CD8-positive, alpha-beta T cell (primary cell): ENCODE measurements at regions of chr10 and their contacts with region 1.

Region 1: GRCh38 chr10:6401562-6402348 is 178.3 kb downstream of the PRKCQ start:
- DNase-seq: peak in 8 of 9 experiments; percentile 40 to 83 (median 62)
- ATAC-seq: peak; percentile 92
- H3K4me3 ChIP-seq: no peak overlapping the region
- H3K4me3 Mint-ChIP-seq: no peak overlapping the region
- H3K27ac ChIP-seq: no peak overlapping the region
- H3K27ac Mint-ChIP-seq: no peak overlapping the region
- H3K4me1 ChIP-seq: peaks cover 6% of the 10 kb centered on the region
- H3K4me1 Mint-ChIP-seq: peaks cover 16% of the 10 kb centered on the region
- H3K27me3 ChIP-seq: peaks cover 0 to 2% of the 10 kb centered on the region in 2 experiments
- H3K27me3 Mint-ChIP-seq: no peaks in the 10 kb centered on the region
- CTCF ChIP-seq: peak; percentile 70

Region 2: DNA sequence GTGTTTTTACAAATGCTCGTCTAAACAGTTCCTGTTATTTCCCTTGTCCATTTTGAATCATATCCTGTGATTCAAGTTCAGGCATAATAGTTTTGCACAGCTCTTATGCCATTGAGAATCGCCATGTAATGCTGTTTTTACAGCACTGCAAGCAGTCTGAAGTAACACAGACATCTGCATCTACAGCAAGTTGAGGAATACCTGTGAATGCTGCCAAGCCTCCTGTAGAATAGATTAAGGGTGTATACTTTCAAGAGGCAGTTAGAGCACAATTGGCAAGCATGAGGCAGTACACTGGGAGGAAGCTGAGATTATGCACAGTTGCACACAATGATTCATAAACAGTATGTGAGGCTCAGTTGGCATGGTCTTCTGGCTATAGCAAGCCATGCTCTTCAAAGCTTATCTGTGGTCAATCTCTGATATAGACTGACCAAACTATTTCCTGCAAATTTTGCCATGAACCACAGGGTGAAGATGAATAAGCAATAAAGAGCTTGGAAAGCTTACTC is 1697.7 kb before region 1 on chr10:
- CTCF ChIA-PET with region 1: no interaction called
- POLR2A ChIA-PET with region 1: no interaction called
- intact Hi-C with region 1: no loop called
- DNase-seq: no peak
- ATAC-seq: no peak
- H3K4me3 ChIP-seq: no peak overlapping the region
- H3K4me3 Mint-ChIP-seq: no peak overlapping the region
- H3K27ac ChIP-seq: no peak overlapping the region
- H3K27ac Mint-ChIP-seq: no peak overlapping the region
- H3K4me1 ChIP-seq: no peaks in the 10 kb centered on the region
- H3K4me1 Mint-ChIP-seq: no peaks in the 10 kb centered on the region
- H3K27me3 ChIP-seq: no peaks in the 10 kb centered on the region
- H3K27me3 Mint-ChIP-seq: peaks cover 22% of the 10 kb centered on the region
- CTCF ChIP-seq: no peak

Region 3: GRCh38 chr10:6014241-6014761 is 387.5 kb before region 1 on chr10:
- CTCF ChIA-PET with region 1: interaction called, 23 read pairs
- POLR2A ChIA-PET with region 1: no interaction called
- intact Hi-C with region 1: loop called (anchors 2 to 5 kb)
- DNase-seq: peak; percentile 28 to 88 (median 73)
- ATAC-seq: peak; percentile 99
- H3K4me3 ChIP-seq: no peak overlapping the region
- H3K4me3 Mint-ChIP-seq: peak overlapping the region; percentile 17
- H3K27ac ChIP-seq: peak overlapping the region; percentile 23 to 76
- H3K27ac Mint-ChIP-seq: peak overlapping the region; percentile 96
- H3K4me1 ChIP-seq: peaks cover 13% of the 10 kb centered on the region
- H3K4me1 Mint-ChIP-seq: peaks cover 14% of the 10 kb centered on the region
- H3K27me3 ChIP-seq: no peaks in the 10 kb centered on the region
- H3K27me3 Mint-ChIP-seq: no peaks in the 10 kb centered on the region
- CTCF ChIP-seq: peak; percentile 84

Region 4: GRCh38 chr10:6136215-6137201 is 265.2 kb before region 1 on chr10:
- CTCF ChIA-PET with region 1: interaction called, 19 read pairs
- POLR2A ChIA-PET with region 1: no interaction called
- intact Hi-C with region 1: no loop called
- DNase-seq: peak in 1 of 9 experiments; percentile 16
- ATAC-seq: peak; percentile 27
- H3K4me3 ChIP-seq: no peak overlapping the region
- H3K4me3 Mint-ChIP-seq: no peak overlapping the region
- H3K27ac ChIP-seq: no peak overlapping the region
- H3K27ac Mint-ChIP-seq: no peak overlapping the region
- H3K4me1 ChIP-seq: peaks cover 14% of the 10 kb centered on the region
- H3K4me1 Mint-ChIP-seq: peaks cover 25% of the 10 kb centered on the region
- H3K27me3 ChIP-seq: no peaks in the 10 kb centered on the region
- H3K27me3 Mint-ChIP-seq: peaks cover 8% of the 10 kb centered on the region
- CTCF ChIP-seq: no peak

Region 5: GRCh38 chr10:6171881-6172695 is 229.7 kb before region 1 on chr10:
- CTCF ChIA-PET with region 1: interaction called, 39 read pairs
- POLR2A ChIA-PET with region 1: no interaction called
- intact Hi-C with region 1: loop called (anchors 1 kb)
- DNase-seq: peak in 1 of 9 experiments; percentile 44
- ATAC-seq: no peak
- H3K4me3 ChIP-seq: no peak overlapping the region
- H3K4me3 Mint-ChIP-seq: no peak overlapping the region
- H3K27ac ChIP-seq: no peak overlapping the region
- H3K27ac Mint-ChIP-seq: peak overlapping the region; percentile 85
- H3K4me1 ChIP-seq: peaks cover 49% of the 10 kb centered on the region
- H3K4me1 Mint-ChIP-seq: peaks cover 83% of the 10 kb centered on the region
- H3K27me3 ChIP-seq: no peaks in the 10 kb centered on the region
- H3K27me3 Mint-ChIP-seq: no peaks in the 10 kb centered on the region
- CTCF ChIP-seq: no peak

Region 6: DNA sequence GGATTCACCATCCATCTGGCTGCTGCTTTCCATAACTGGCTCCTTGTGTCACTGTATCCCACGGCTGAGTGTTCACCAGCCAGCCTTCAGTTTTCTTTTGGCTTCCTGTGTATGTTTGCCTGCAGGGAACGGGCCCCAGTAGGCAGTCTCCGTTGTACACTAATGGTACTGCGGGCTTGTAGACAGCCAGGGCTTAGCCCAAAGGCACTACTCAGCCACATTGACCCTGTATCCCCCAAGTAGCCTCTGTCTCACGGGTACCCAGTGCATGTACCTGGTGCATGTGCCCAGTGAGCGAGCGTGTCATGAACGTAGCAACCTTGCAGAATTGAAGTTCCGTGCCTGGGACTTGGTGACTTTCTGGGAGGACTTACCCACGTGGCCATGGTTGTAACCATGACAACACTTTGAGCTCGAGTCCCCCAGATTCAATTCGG is 192.9 kb before region 1 on chr10:
- CTCF ChIA-PET with region 1: interaction called, 12 read pairs
- POLR2A ChIA-PET with region 1: interaction called, 7 read pairs
- intact Hi-C with region 1: no loop called
- DNase-seq: peak in 1 of 9 experiments; percentile 16
- ATAC-seq: peak; percentile 18
- H3K4me3 ChIP-seq: no peak overlapping the region
- H3K4me3 Mint-ChIP-seq: no peak overlapping the region
- H3K27ac ChIP-seq: no peak overlapping the region
- H3K27ac Mint-ChIP-seq: no peak overlapping the region
- H3K4me1 ChIP-seq: peaks cover 9% of the 10 kb centered on the region
- H3K4me1 Mint-ChIP-seq: peaks cover 24% of the 10 kb centered on the region
- H3K27me3 ChIP-seq: no peaks in the 10 kb centered on the region
- H3K27me3 Mint-ChIP-seq: no peaks in the 10 kb centered on the region
- CTCF ChIP-seq: no peak

Region 7: GRCh38 chr10:6364893-6365292 is 36.9 kb before region 1 on chr10:
- CTCF ChIA-PET with region 1: interaction called, 11 read pairs
- POLR2A ChIA-PET with region 1: interaction called, 3 read pairs
- intact Hi-C with region 1: no loop called
- DNase-seq: no peak
- ATAC-seq: no peak
- H3K4me3 ChIP-seq: no peak overlapping the region
- H3K4me3 Mint-ChIP-seq: no peak overlapping the region
- H3K27ac ChIP-seq: no peak overlapping the region
- H3K27ac Mint-ChIP-seq: no peak overlapping the region
- H3K4me1 ChIP-seq: no peaks in the 10 kb centered on the region
- H3K4me1 Mint-ChIP-seq: no peaks in the 10 kb centered on the region
- H3K27me3 ChIP-seq: no peaks in the 10 kb centered on the region
- H3K27me3 Mint-ChIP-seq: no peaks in the 10 kb centered on the region
- CTCF ChIP-seq: no peak